ENCODE measurements at regions of chr10 and their contacts with region 1.

Region 1: DNA sequence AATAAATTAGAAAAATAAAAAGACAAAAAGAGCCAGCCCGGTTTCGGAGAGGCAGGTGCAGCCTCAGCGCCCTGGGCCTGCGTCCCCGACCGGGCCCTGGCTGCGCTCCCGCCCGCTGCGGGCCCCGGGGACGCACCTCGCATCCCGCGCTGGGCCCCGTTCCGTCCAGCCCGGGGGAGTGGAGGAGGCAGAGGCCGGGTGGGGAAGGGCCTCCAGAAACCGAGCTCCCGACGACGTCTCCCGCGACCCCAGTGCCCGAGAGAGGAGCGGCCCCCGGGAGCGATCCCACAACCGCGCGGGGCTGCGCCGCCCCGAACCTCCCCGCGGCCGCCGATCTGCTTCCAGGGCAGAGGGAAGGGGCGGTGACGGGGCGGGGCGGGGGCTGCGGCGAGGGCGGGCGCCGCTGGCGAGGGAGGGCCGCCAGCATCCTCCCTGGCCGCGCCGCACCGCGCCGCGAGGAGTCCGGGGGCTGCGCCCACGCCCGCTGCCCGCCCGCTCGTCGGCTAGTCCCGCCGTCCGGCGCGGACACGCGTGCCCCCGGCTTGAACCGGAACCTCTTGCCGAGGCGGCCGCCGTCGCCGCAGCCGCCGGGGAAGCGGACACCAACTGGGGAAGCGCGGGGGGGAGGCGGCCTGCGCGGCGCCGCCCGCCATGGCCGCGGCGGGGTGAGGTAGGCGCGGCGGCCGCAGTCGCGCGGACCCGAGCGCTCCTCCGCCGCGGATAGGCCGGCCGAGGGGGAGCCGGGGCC is at the start of gene CCNY:
- DNase-seq: peak; percentile 66
- H3K4me3 Mint-ChIP-seq: peak within 1 kb of the TSS; percentile 90
- H3K27ac Mint-ChIP-seq: peak within 1 kb of the TSS; percentile 89
- H3K4me1 Mint-ChIP-seq: peaks cover 53% of the 10 kb centered on the region
- H3K27me3 Mint-ChIP-seq: no peaks in the 10 kb centered on the region
- total RNA-seq, gene CCNY: 60.4 and 67.1 TPM in 2 replicates

Region 2: DNA sequence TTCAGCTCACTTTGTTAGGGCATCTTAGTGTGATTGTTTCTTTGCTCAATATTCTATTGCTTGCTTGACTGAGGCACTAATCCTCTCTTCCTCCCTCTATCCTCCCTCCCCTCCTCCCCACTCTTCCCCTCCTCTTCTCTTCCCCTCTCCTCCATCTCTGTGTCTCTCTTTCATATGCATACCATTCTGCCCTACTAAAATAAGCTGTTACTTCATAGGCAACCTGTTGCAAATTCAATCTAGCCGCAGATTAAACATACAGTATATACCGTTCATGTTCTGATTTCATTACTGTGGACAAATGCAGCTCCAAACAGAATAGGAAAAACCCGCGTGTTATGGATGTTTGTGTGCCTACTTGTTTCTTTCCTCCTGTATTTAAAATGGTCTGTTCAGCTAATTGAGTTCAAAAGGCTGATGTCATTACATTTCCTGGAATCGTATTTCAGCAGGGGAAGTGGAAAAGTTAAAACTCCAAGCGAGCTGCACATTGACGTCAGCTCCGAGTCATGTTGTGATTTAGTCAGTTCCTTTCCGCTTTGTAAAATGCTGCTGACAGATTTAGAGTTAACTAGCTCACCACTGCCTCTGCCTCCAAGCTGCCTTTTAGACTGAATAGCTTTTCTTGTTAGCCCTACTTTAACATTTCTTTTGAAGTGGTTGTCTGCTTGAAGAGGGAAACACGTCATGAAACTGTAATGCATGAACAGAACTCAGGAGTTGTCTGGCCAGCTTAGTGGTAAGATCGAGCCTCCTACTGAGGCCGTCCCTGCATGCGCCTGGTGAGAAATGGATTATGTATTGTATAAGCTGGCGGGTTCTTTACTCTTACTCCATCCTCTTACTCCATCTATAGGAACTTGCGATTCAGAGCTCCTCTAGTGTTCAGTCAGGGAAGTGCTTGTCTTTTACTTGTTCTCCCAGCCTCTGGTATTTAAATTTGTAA is 140.6 kb before region 1 on chr10:
- intact Hi-C with region 1: loop called (anchors 1 kb)
- DNase-seq: peak; percentile 76
- H3K4me3 Mint-ChIP-seq: peak overlapping the region; percentile 95
- H3K27ac Mint-ChIP-seq: peak overlapping the region; percentile 99
- H3K4me1 Mint-ChIP-seq: peaks cover 44% of the 10 kb centered on the region
- H3K27me3 Mint-ChIP-seq: no peaks in the 10 kb centered on the region

Region 3: DNA sequence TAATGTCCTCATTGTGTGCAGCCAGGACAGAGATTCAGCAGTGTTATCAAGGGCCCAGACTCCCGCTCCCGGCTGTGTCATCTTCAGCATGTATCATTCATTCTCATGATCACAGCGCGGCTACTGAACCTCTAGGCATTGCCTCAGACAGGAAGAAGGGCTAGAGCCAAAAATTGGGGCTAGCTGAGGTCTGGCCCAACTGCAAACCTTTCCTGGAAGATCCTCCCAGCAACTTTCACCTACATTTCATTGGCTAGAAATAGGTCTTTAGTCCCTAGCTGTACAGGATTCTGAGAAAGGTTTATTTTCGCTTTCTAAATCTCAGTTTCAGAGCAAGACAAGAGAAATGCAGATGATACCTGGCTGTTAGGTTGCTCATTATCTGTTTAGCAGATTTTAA is 127.7 kb before region 1 on chr10:
- intact Hi-C with region 1: no loop called
- DNase-seq: peak; percentile 64
- H3K4me3 Mint-ChIP-seq: peak overlapping the region; percentile 59
- H3K27ac Mint-ChIP-seq: peak overlapping the region; percentile 87
- H3K4me1 Mint-ChIP-seq: peaks cover 57% of the 10 kb centered on the region
- H3K27me3 Mint-ChIP-seq: no peaks in the 10 kb centered on the region

Region 4: GRCh38 chr10:35379226-35380137 is 43.2 kb after region 1 on chr10:
- intact Hi-C with region 1: loop called (anchors 2 kb)
- DNase-seq: no peak
- H3K4me3 Mint-ChIP-seq: no peak overlapping the region
- H3K27ac Mint-ChIP-seq: peak overlapping the region; percentile 28
- H3K4me1 Mint-ChIP-seq: peaks cover 37% of the 10 kb centered on the region
- H3K27me3 Mint-ChIP-seq: no peaks in the 10 kb centered on the region

Region 5: DNA sequence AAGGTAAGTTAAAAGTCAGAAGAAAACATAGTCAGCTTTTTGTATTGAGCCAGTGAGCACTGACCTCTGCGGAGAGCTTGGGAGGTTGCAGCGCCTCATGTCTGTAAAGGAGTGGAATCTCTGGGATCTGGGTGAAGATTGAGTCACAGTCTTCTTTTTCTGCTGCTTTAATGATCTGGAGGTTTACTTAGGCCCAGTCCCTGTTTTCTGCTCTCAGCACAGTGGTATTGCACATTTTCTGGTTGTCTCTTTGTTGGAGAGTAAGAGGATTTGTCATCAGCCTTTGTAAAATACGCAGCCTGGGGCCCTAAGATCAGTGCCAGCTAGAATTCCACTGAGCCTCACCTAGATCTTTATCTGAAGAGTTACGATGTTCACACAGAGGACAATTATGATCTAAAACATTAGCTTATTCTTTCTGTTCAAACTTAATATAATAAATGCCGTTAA is 210.6 kb after region 1 on chr10:
- intact Hi-C with region 1: loop called (anchors 10 kb)
- DNase-seq: no peak
- H3K4me3 Mint-ChIP-seq: no peak overlapping the region
- H3K27ac Mint-ChIP-seq: no peak overlapping the region
- H3K4me1 Mint-ChIP-seq: peaks cover 6% of the 10 kb centered on the region
- H3K27me3 Mint-ChIP-seq: no peaks in the 10 kb centered on the region

Measured in activated T-helper 2 cell treated with anti-CD3 and anti-CD28 coated beads, Interferon-gamma antibody, Interleukin-2, Interleukin-4, amounts not matched to agents 10 μg/mL and 5 μg/mL and 100 μg/mL, durations not matched to agents 14 hours and 24 hours and 36 hours (primary cell).